Endothelial cell of umbilical vein (primary cell): ENCODE measurements at regions of chr12 and their contacts with region 1.

Region 1: DNA sequence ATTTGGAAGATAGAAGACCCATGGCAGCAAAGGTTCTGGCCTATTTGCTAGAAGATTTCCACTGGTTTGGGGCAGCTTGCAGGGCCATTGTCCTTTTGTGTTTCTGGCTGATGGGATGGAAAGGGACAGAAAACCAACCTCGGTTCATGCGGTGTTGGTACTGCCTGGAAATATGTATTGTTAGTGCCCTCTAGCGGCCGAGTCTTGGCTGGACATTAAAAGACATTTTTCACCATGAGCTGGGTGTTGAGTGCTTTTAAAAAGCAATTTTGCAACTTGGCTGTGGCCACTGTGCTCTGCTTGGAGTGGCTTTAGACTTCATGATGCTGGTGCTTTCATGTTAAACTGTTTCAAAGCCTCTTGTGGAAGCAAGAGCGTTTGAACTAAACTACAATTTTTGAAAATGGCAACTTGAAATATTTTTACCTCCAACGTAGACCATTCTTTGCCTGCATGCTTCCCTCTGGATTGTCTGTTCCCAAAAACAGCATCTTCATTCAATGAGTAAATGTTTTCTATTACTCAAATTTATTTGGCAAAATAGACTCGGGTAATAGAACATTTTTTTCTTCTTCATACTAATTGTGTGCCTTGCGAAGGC is 102.7 kb upstream of the TBX5 start:
- DNase-seq: peak; percentile 56
- H3K4me3 ChIP-seq: no peak overlapping the region
- H3K27ac ChIP-seq: no peak overlapping the region
- H3K4me1 ChIP-seq: no peaks in the 10 kb centered on the region
- H3K27me3 ChIP-seq: no peaks in the 10 kb centered on the region
- CTCF ChIP-seq: peak; percentile 63 to 64
- POLR2A ChIP-seq: no peak

Region 2: DNA sequence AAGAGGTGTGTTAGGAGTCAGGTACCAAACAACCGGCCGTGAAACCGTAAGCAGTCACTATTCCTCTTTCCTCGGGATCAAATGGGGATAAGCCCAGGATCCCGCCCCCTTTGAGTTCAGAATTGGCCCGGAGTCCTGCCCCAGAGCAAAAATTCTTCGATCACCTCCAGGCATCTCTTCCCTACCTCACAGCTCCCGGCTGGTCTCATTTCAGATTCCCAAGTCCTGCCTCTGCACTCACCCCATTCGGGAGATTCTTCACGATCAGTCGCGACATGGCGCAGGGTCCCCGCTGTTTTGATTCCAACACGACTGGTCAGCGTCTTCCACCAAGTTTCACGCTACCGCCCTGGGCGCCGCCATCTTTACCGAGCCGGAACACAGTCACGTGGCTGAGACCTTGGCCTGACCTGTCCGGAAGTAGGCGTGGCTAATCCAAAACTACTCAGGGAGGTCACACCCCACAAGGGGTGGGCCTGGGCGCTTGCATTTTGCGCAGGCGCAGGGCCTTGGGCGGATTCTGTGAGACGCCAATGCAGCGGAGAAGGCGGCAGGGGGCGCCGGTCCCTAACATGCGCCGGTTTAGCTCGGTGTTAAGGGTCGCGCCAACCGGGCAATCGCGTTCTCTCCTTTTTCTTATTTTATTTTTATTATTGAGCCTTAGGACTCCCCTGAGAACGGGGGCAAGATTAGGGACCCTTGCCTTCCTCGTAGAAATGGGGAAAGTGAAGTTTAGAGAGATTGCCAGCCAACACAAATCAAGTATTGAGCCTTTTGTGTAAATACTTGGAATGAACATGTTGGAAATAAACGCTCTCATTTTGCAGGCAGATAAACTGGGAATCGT is 542.5 kb before region 1 on chr12 and contains the start of gene RBM19:
- CTCF ChIA-PET with region 1: interaction called, 27 read pairs
- POLR2A ChIA-PET with region 1: no interaction called
- dilution Hi-C with region 1: no loop called
- intact Hi-C with region 1: loop called (anchors 1 kb)
- DNase-seq: peak; percentile 98
- H3K4me3 ChIP-seq: peak within 1 kb of the TSS; percentile 54 to 85 (median 84)
- H3K27ac ChIP-seq: peak within 1 kb of the TSS; percentile 32
- H3K4me1 ChIP-seq: peaks cover 12% of the 10 kb centered on the region
- H3K27me3 ChIP-seq: peaks cover 0 to 2% of the 10 kb centered on the region in 2 experiments
- CTCF ChIP-seq: peak; percentile 94 to 96
- POLR2A ChIP-seq: peak; percentile 82
- total RNA-seq, gene RBM19: 34.0 and 34.4 TPM in 2 replicates

Region 3: DNA sequence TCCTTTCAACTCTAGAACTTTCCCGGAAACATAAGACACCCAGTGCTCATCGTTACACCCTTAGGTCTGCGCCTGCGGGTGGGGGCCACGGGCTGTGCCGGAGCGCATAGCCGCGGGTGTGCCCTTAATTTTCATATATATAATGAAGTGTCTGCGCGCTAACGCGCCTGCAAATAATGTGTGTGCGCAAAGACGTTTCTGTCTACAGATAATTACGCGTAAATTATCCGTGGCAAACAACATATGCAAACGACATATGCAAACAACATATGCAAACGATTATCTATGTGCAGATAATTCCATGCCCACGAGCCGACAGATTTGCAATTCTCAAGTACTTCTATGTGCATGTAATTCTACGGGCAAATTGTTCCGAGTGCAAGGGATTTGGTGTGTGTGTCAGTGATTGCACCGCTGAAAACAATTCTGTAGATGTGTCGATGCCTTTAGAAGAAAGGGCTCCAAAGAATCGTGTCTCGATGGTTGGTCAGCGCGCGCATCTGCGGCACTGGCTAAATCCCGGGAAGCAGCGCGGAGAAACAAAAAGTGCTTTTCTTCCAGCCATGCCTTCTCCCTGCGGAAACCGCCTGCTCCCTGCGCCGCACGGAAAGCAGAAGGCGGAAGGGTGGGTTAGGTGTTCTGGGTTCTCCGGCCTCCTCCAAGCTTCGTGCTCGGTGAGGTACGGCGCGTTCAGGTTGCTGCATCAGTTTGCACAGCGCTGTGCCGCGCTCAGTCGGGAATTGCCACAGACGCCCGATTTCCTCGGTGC is 68.2 kb before region 1 on chr12:
- CTCF ChIA-PET with region 1: no interaction called
- POLR2A ChIA-PET with region 1: no interaction called
- dilution Hi-C with region 1: no loop called
- intact Hi-C with region 1: no loop called
- DNase-seq: no peak
- H3K4me3 ChIP-seq: no peak overlapping the region
- H3K27ac ChIP-seq: no peak overlapping the region
- H3K4me1 ChIP-seq: no peaks in the 10 kb centered on the region
- H3K27me3 ChIP-seq: peaks cover 46 to 47% of the 10 kb centered on the region in 2 experiments
- CTCF ChIP-seq: no peak
- POLR2A ChIP-seq: no peak